Left cardiac atrium (tissue), 4 donors: ENCODE measurements at regions of chr7 and their contacts with region 1.

Region 1: DNA sequence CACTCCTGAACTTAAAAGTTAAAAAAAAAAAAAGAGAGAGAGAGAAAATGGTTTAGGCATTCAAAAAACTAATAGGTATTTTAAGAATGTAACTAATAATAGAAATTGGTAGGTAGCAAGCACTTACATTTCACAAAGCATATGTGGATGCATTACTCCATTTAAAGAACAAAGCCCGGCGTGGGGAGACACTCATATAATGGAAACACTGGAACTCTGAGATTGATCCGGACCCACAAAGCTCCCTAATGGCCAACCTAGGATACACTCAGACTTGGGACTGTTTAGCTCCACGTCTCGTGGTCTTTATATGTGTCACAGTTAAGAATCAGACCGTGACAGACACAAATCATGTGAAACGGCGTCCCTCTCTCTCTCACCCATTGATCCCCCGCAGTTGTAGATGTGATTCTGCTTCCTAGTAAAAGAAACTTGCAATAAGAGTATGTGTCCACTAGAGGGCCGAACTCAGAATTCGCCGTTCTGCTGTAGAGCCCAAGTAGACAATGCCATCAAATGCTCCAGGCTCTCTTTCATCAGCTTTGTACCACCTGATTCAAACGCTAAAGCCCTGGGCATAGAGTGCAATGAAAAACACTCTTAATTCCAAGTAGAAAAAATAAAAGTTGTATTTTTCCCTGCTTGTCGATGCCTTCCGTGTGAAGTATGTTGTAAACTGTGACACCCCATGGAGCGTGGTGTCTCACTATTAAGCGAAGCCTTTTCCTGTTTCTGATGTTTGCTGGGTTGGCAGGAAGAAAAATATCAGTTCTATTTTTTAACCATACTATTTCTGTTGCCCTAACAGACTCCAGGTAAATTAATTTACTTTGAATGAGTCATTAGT is 429.0 kb upstream of the MTPN start:
- DNase-seq: no peak
- ATAC-seq: peak; percentile 67

Region 2: DNA sequence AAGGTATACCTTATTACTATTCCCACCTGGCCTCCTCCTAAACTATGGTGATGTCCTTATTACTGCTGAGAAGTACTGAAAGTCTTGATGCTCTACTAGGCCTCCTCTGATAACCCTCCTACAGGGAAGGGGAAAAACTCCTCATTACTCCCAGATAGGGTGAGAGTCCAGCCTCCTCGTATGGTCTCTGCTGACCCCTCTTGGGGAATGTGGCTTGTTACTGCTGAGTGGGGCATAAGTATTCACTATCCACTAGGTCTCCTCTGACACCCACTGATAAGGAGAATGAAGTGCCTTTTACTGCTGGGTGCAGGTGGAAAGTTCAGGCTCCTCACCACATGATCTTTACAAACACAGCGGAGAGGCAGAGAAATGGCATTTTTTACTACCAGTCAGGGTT is 685.2 kb after region 1 on chr7:
- intact Hi-C with region 1: loop called in 1 of 2 experiments (anchors 5 kb)
- DNase-seq: no peak
- ATAC-seq: peak; percentile 83 to 92

Region 3: DNA sequence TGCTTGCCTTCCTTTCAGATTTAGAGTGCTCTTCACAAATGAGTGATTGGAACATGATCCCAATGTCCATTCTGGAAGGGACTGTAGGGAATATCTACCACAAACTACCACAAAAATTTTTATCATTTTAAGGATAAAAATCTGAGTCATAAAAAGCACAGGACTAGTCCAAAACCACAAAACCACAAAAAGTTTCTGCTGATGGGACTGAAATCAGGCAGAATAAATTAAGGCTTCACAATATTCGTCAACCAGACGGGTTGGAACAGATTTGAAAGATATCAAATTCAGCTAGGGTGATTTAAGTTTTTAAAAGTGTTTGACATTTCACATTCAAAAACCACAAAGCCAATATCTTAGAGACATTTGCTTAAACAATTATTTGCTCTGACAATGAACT is 1037.5 kb after region 1 on chr7:
- intact Hi-C with region 1: loop called in 1 of 2 experiments (anchors 10 kb)
- DNase-seq: no peak
- ATAC-seq: no peak